A673 (cell line): ENCODE measurements at regions of chr3 and their contacts with region 1.

Region 1: DNA sequence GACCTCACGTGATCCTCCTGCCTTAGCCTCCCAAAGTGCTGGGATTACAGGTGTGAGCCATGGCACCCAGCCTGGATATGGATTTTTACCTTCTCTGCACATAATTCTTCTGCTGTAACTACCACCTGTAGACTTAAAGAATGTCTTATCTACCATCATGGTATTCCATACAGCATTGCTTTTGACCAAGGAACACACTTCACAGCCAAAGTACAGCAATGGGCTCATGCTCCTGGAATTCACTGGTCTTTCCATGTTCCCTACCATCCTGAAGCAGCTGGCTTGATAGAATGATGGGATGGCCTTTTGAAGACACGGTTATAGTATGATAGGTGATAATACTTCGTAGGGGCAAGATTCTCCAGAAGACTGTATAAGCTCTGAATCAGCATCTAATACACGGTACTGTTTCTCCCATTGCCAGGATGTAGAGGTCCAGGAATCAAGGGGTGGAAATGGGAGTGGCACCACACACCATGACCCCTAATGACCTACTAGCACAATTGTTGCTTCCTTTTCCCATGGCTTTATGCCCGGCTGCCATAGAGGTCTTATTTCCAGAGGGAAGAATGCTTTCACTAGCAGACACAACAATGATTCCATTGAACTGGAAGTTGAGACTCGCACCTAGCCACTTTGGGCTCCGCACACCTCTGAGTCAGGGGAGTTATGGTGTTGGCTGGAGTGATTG is 60.9 kb upstream of the CDV3 start:
- DNase-seq: no peak
- H3K4me3 ChIP-seq: no peak overlapping the region
- H3K27ac ChIP-seq: no peak overlapping the region
- H3K4me1 ChIP-seq: no peaks in the 10 kb centered on the region
- H3K27me3 ChIP-seq: no peaks in the 10 kb centered on the region
- CTCF ChIP-seq: no peak

Region 2: DNA sequence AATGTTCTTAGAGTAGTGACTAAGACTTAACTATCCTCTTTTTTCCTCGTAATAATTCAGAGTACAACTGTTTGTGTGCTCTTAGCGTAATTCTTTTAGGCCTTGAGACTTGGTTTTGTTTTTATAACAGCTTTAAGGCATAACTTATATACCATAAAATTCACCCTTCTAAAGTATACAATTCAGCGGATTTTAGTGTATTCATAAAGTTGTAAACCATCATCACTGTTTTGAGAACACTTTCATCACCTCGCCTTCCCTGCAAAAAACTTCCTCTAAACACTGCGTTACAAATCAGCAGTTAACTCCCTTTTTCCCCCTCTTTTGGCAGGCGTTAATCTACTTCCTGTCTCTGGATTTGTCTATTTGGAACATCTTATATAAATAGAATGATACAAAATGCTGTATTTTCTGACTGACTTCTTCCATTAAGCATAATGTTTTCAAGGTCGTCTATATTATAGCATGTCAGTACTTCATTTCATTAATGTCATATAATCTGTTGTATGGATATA is 1076.6 kb before region 1 on chr3:
- CTCF ChIA-PET with region 1: interaction called, 10 read pairs
- POLR2A ChIA-PET with region 1: no interaction called
- intact Hi-C with region 1: no loop called
- DNase-seq: peak; percentile 55
- H3K4me3 ChIP-seq: no peak overlapping the region
- H3K27ac ChIP-seq: peak overlapping the region; percentile 66
- H3K4me1 ChIP-seq: peaks cover 31% of the 10 kb centered on the region
- H3K27me3 ChIP-seq: no peaks in the 10 kb centered on the region
- CTCF ChIP-seq: no peak

Region 3: GRCh38 chr3:133487920-133488540 is 24.5 kb before region 1 on chr3:
- CTCF ChIA-PET with region 1: no interaction called
- POLR2A ChIA-PET with region 1: no interaction called
- intact Hi-C with region 1: no loop called
- DNase-seq: peak; percentile 42
- H3K4me3 ChIP-seq: no peak overlapping the region
- H3K27ac ChIP-seq: no peak overlapping the region
- H3K4me1 ChIP-seq: no peaks in the 10 kb centered on the region
- H3K27me3 ChIP-seq: no peaks in the 10 kb centered on the region
- CTCF ChIP-seq: peak; percentile 57